ENCODE measurements at regions of chr1 and their contacts with region 1.

Region 1: GRCh38 chr1:34356853-34357252 is 180.1 kb downstream of the C1orf94 start:
- DNase-seq: no peak
- H3K4me3 ChIP-seq: no peak overlapping the region
- H3K27ac ChIP-seq: no peak overlapping the region
- H3K4me1 ChIP-seq: no peaks in the 10 kb centered on the region
- H3K27me3 ChIP-seq: no peaks in the 10 kb centered on the region
- CTCF ChIP-seq: no peak
- EP300 ChIP-seq: no peak
- POLR2A ChIP-seq: no peak

Region 2: DNA sequence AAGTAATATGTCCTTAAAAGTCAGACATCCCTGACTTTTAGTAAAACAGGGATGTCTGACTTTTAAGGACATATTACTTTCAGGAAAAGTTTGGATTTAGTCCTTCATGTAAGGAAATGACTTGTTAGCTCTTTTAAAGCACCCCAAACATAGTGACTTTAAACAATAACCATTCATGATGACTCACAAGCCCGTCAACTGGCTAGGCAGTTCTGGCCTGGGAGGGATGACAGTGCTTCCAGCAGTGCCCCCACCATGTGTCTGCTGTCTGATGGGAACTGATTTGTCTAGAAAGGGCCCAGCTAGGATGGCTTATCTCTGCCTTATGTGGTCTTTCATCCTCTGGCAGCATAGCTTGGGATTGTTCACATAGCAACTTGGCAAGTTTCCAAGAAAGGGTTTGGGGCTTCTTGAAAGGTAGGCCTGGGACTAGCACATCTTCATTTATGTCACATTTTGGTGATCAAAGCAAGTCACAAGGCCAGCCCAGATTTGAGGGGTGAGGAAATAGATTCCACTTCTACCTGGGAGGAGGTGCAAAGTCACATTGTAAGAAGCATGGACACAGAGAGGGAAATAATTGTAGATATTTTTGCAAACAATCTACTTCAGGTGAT is 36.7 kb before region 1 on chr1:
- in situ Hi-C with region 1: no loop called
- intact Hi-C with region 1: no loop called
- DNase-seq: no peak
- H3K4me3 ChIP-seq: no peak overlapping the region
- H3K27ac ChIP-seq: no peak overlapping the region
- H3K4me1 ChIP-seq: no peaks in the 10 kb centered on the region
- H3K27me3 ChIP-seq: no peaks in the 10 kb centered on the region
- CTCF ChIP-seq: no peak
- EP300 ChIP-seq: no peak
- POLR2A ChIP-seq: no peak

Region 3: DNA sequence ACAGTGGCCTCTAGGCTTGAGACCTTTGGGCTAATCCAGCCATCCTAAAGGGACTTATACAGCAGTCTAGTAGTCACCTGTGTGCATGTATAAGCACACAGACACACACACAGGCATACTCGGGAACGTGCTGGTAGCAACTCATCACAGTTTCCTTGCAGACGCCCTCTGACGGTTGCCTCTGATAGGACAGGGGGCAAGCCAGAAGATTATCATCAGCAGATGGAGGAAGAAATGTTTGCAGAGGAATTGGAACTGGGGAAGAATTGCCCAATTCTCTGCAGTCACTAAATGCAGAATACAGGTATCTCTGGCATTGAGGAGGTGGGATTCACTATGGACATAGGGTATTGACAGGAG is 42.0 kb after region 1 on chr1:
- in situ Hi-C with region 1: no loop called
- intact Hi-C with region 1: loop called (anchors 1 kb)
- DNase-seq: no peak
- H3K4me3 ChIP-seq: no peak overlapping the region
- H3K27ac ChIP-seq: no peak overlapping the region
- H3K4me1 ChIP-seq: no peaks in the 10 kb centered on the region
- H3K27me3 ChIP-seq: peaks cover 9% of the 10 kb centered on the region
- CTCF ChIP-seq: no peak
- EP300 ChIP-seq: no peak
- POLR2A ChIP-seq: no peak